Naive thymus-derived CD4-positive, alpha-beta T cell (primary cell): ENCODE measurements at regions of chr5 and their contacts with region 1.

Region 1: DNA sequence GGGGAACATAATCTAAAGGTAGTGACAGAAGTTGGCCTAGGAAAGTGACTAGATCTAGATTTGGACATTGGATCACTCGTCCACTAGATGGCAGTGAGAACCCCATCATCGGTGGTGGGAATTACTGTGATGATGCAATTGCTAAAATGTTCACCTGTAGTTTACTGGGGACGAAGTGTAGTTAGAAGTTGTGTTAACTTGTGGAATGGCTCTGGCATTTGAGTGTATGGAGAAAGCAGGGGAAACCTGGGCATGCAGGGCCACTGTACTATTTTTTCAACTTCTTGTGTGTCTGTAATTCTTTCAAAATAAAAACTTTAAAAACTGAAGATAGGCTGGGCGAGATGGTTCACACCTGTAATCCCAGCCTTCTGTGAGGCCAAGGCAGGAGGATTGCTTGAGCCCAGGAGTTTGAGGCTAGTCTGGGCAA is 75.5 kb downstream of the PHAX start:
- DNase-seq: peak; percentile 10 to 78 (median 68)
- ATAC-seq: peak; percentile 87
- H3K4me3 ChIP-seq: no peak overlapping the region
- H3K4me3 Mint-ChIP-seq: peak overlapping the region in 1 of 10 donors; percentile 43
- H3K27ac ChIP-seq: no peak overlapping the region
- H3K27ac Mint-ChIP-seq: peak overlapping the region in 4 of 9 donors; percentile 0 to 50 (median 1)
- H3K4me1 ChIP-seq: no peaks in the 10 kb centered on the region
- H3K4me1 Mint-ChIP-seq: peaks cover 4 to 19% (median 5%) of the 10 kb centered on the region in 7 donors
- H3K27me3 ChIP-seq: no peaks in the 10 kb centered on the region
- H3K27me3 Mint-ChIP-seq: no peaks in the 10 kb centered on the region

Region 2: DNA sequence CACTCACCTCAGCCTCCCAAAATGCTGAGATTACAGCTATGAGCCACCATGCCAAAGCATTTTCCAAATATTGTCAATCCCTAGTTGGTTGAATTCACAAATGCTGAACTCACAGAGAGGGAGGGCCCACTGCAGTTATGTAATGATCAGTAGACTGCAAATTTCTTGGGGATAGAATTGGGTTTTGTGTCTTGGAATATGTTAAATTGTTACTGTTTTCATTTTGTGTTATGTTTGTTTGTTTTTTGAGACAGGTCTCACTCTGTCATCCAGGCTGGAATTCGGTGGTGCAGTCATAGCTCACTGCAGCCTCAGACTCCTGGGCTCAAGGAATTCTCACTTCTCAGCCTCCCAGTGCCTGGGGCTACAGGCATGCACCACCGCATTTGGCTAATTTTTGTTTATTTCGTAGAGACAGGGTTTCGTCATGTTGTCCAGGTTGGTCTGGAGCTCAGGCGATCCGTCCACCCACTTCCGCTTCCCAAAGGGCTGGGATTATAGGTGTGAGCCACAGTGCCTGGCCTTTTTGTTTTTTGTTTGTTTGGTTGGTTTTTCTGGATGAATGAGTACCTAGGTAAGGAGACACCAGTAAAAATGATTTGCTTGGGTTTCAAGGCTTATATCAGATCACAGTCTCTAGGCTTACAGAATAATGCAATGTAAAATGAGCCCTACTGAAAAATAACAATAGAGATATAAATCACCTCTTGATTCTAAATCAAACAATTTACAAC is 69.2 kb after region 1 on chr5:
- CTCF ChIA-PET with region 1: no interaction called
- POLR2A ChIA-PET with region 1: no interaction called
- intact Hi-C with region 1: loop called (anchors 1 kb)
- DNase-seq: no peak
- ATAC-seq: no peak
- H3K4me3 ChIP-seq: no peak overlapping the region
- H3K4me3 Mint-ChIP-seq: no peak overlapping the region
- H3K27ac ChIP-seq: no peak overlapping the region
- H3K27ac Mint-ChIP-seq: peak overlapping the region in 1 of 9 donors; percentile 26
- H3K4me1 ChIP-seq: peaks cover 4 to 13% of the 10 kb centered on the region in 2 donors
- H3K4me1 Mint-ChIP-seq: peaks cover 11 to 30% (median 19%) of the 10 kb centered on the region in 7 donors
- H3K27me3 ChIP-seq: no peaks in the 10 kb centered on the region
- H3K27me3 Mint-ChIP-seq: peaks cover 0 to 4% (median 0%) of the 10 kb centered on the region in 5 donors

Region 3: DNA sequence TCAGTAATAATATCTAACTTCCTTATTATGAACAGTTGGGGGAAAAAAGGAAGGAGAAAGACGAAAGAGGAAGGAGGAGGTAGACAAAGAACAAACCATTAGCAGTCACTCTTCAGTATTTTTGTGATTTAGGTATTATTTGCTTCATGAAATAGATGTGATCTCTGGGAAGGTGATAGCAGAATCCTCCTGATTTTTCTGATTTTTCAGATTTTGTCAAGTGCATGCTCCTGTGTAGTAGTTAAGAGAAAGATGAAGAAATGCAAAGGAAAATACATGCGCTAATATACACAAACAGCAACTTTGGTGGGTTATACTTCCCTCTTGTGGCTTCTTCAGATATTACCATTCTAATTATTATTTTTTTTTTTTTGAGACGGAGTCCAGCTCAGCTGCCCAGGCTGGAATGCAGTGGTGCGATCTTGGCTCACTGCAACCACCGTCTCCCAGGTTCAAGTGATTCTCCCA is 132.3 kb after region 1 on chr5:
- CTCF ChIA-PET with region 1: interaction called, 6 read pairs
- POLR2A ChIA-PET with region 1: no interaction called
- intact Hi-C with region 1: loop called (anchors 1 kb)
- DNase-seq: peak in 5 of 9 donors; percentile 17 to 37 (median 22)
- ATAC-seq: peak; percentile 52
- H3K4me3 ChIP-seq: no peak overlapping the region
- H3K4me3 Mint-ChIP-seq: no peak overlapping the region
- H3K27ac ChIP-seq: no peak overlapping the region
- H3K27ac Mint-ChIP-seq: peak overlapping the region in 4 of 9 donors; percentile 10 to 95 (median 38)
- H3K4me1 ChIP-seq: peaks cover 8 to 11% of the 10 kb centered on the region in 2 donors
- H3K4me1 Mint-ChIP-seq: peaks cover 0 to 58% (median 24%) of the 10 kb centered on the region in 7 donors
- H3K27me3 ChIP-seq: no peaks in the 10 kb centered on the region
- H3K27me3 Mint-ChIP-seq: no peaks in the 10 kb centered on the region

Region 4: DNA sequence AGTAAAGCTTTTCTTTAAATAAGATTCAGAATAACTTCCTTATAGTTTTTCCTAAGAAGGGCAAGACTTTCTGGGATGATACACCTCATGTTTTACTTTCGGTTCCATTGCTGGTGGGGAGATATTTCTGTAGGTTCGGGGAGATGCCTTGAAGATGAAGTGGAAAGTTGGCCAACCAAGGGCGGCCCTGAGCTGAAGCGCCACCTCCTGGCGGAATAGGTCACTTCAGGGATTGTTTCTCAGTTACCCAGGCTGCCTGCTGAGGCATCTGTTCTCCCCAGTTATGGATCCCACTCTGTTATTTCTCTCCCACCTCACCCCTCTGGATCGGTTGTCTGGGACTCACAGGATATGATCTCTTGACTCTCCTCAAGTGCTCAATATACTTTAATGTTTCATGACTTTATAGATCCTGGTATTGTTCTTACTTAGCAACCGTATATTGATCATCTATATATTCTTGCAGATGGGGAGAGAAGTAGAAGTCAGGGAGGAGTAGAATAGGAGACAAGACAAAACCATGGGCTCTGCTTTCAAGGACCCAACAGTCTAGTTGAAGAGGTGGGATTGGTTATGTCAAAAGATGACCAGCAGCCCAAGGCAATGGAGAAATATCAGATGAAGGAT is 637.8 kb after region 1 on chr5:
- CTCF ChIA-PET with region 1: interaction called, 6 read pairs
- POLR2A ChIA-PET with region 1: no interaction called
- intact Hi-C with region 1: loop called in 1 of 2 experiments (anchors 1 kb)
- DNase-seq: peak; percentile 12 to 68 (median 50)
- ATAC-seq: peak; percentile 81
- H3K4me3 ChIP-seq: no peak overlapping the region
- H3K4me3 Mint-ChIP-seq: peak overlapping the region in 1 of 10 donors; percentile 2
- H3K27ac ChIP-seq: no peak overlapping the region
- H3K27ac Mint-ChIP-seq: no peak overlapping the region
- H3K4me1 ChIP-seq: no peaks in the 10 kb centered on the region
- H3K4me1 Mint-ChIP-seq: peaks cover 0 to 7% (median 0%) of the 10 kb centered on the region in 7 donors
- H3K27me3 ChIP-seq: no peaks in the 10 kb centered on the region
- H3K27me3 Mint-ChIP-seq: peaks cover 0 to 32% (median 4%) of the 10 kb centered on the region in 5 donors